Ovary (tissue), 10 donors: ENCODE measurements at regions of chr11 and their contacts with region 1.

Region 1: GRCh38 chr11:95705485-95706124 is 84.0 kb downstream of the FAM76B start:
- DNase-seq: peak; percentile 88 to 93 (median 89)
- H3K4me3 ChIP-seq: peak overlapping the region; percentile 1
- H3K27ac ChIP-seq: peak overlapping the region; percentile 52 to 73
- H3K4me1 ChIP-seq: peaks cover 10% of the 10 kb centered on the region
- H3K27me3 ChIP-seq: no peaks in the 10 kb centered on the region
- CTCF ChIP-seq: peak; percentile 80 to 96 (median 87)
- EP300 ChIP-seq: no peak
- POLR2A ChIP-seq: no peak

Region 2: DNA sequence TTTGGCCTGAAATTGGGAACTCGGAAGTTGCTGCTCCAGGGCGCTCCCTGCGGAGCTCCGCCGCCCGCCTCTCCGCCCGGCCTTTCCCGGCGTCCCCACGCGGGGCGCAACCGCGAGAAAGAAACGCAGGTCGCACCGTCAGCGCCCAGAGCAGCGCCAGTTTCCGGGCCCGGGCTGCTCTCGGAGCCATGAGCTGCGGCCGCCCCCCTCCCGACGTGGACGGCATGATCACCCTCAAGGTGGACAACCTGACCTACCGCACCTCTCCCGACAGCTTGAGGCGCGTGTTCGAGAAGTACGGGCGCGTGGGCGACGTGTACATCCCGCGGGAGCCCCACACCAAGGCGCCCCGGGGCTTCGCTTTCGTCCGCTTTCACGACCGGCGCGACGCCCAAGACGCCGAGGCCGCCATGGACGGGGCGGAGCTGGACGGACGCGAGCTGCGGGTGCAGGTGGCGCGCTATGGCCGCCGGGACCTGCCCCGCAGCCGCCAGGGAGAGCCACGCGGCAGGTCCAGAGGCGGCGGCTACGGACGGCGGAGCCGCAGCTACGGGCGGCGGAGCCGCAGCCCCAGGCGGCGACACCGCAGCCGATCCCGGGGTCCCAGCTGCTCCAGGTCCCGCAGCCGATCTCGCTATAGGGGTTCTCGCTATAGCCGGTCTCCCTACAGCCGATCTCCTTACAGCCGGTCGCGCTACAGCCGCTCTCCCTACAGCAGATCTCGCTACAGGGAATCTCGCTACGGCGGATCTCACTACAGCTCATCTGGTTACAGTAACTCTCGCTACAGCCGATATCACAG is 638.4 kb before region 1 on chr11:
- intact Hi-C with region 1: loop called in 1 of 4 experiments (anchors 5 kb)
- DNase-seq: peak; percentile 85 to 93 (median 88)
- H3K4me3 ChIP-seq: peak overlapping the region; percentile 71
- H3K27ac ChIP-seq: peak overlapping the region; percentile 98 to 99
- H3K4me1 ChIP-seq: peaks cover 1% of the 10 kb centered on the region
- H3K27me3 ChIP-seq: no peaks in the 10 kb centered on the region
- CTCF ChIP-seq: peak; percentile 67 to 83 (median 73)
- EP300 ChIP-seq: no peak
- POLR2A ChIP-seq: peak; percentile 44

Region 3: GRCh38 chr11:95231127-95231880 is 474.3 kb before region 1 on chr11 and contains the start of gene SESN3:
- intact Hi-C with region 1: loop called in 1 of 4 experiments (anchors 10 kb)
- DNase-seq: peak; percentile 98 to 99 (median 98)
- H3K4me3 ChIP-seq: peak within 1 kb of the TSS; percentile 89
- H3K27ac ChIP-seq: peak within 1 kb of the TSS; percentile 89 to 90
- H3K4me1 ChIP-seq: peaks cover 3% of the 10 kb centered on the region
- H3K27me3 ChIP-seq: no peaks in the 10 kb centered on the region
- CTCF ChIP-seq: peak in 2 of 3 donors; percentile 23 to 34
- EP300 ChIP-seq: no peak
- POLR2A ChIP-seq: peak; percentile 73
- total RNA-seq, gene SESN3: 37.1 to 77.3 (median 49.4) TPM

Region 4: GRCh38 chr11:95337175-95337957 is 368.2 kb before region 1 on chr11:
- intact Hi-C with region 1: loop called in 2 of 4 experiments (anchors 5 kb)
- DNase-seq: peak; percentile 58 to 80 (median 72)
- H3K4me3 ChIP-seq: no peak overlapping the region
- H3K27ac ChIP-seq: peak overlapping the region; percentile 46 to 85
- H3K4me1 ChIP-seq: peaks cover 16% of the 10 kb centered on the region
- H3K27me3 ChIP-seq: no peaks in the 10 kb centered on the region
- CTCF ChIP-seq: no peak
- EP300 ChIP-seq: no peak
- POLR2A ChIP-seq: no peak

Region 5: GRCh38 chr11:95404330-95404729 is 301.3 kb before region 1 on chr11:
- intact Hi-C with region 1: no loop called
- DNase-seq: no peak
- H3K4me3 ChIP-seq: no peak overlapping the region
- H3K27ac ChIP-seq: no peak overlapping the region
- H3K4me1 ChIP-seq: no peaks in the 10 kb centered on the region
- H3K27me3 ChIP-seq: no peaks in the 10 kb centered on the region
- CTCF ChIP-seq: no peak
- EP300 ChIP-seq: no peak
- POLR2A ChIP-seq: no peak

Region 6: GRCh38 chr11:95659088-95659487 is 46.5 kb before region 1 on chr11:
- intact Hi-C with region 1: no loop called
- DNase-seq: no peak
- H3K4me3 ChIP-seq: no peak overlapping the region
- H3K27ac ChIP-seq: no peak overlapping the region
- H3K4me1 ChIP-seq: no peaks in the 10 kb centered on the region
- H3K27me3 ChIP-seq: no peaks in the 10 kb centered on the region
- CTCF ChIP-seq: no peak
- EP300 ChIP-seq: no peak
- POLR2A ChIP-seq: no peak

Region 7: DNA sequence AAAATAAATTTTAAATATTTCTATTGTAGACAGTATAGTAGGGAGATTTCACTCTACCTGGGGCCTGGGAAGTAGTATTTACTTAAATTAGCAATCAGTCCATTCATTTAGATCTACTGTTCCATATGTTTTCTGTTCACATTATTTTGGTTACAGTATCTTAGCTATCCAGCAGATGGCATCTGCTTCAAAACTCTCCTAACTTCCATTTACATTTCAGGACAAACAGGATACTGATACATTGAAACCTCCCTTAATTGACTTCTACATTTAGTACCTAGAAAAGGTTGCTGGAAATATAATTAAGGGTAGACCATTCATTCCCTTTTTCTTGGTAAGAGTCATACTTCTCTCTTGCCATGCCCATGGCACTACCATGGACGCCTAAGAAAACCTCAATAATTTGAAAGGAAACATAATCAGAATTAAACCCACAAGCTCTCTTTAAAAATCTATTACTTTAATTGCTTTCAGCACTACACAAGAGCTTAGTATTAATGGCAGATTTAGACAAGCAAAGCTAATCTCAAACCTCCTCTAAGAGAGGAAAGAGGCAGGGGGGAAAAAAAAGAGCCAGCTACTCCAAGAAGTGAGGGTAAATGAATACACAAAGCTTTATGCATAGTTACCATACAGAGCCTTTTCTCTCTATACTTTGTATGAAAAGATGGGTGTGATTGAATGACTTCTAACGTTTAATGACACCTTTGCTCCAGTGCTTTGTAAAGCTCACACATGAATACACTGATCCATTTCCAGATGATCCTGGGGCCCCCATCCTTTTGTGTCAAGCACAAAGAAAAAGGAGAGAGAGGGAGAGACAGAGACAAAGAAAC is 349.5 kb after region 1 on chr11:
- intact Hi-C with region 1: no loop called
- DNase-seq: no peak
- H3K4me3 ChIP-seq: no peak overlapping the region
- H3K27ac ChIP-seq: no peak overlapping the region
- H3K4me1 ChIP-seq: peaks cover 14% of the 10 kb centered on the region
- H3K27me3 ChIP-seq: no peaks in the 10 kb centered on the region
- CTCF ChIP-seq: peak; percentile 28 to 66 (median 47)
- EP300 ChIP-seq: no peak
- POLR2A ChIP-seq: no peak